ENCODE measurements at regions of chr9 and their contacts with region 1.

Region 1: DNA sequence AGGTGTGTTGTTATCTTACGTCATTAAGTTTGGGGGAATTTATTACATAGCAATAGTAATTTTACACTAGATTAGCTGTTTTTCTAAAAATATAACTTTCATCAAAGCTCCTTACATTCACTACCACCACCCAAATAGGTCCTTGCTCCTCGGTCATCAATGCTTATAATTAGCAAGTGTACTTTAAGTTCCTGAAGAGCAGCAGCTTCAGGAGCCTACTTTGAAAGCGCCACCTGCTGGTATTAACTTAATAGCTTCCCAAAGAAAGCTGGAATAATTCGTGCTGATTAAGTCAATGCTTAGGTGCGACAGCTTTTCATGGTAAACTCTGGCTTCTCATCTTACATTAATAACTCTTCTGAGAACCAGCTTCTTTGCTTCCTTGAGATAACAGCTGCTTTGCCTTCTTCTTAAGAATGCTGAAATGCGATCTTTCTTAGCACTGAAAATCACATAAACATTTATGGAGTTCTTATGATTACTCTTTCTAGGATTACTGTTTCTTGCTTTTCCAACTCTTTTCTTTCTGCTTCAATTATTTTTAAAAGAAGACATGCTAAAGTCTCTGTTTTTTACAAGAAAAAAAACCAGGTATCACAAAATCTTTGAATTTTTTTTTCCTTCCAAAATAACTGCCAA is 10.0 kb upstream of the C5 start:
- DNase-seq: no peak
- ATAC-seq: peak; percentile 40 to 41

Region 2: DNA sequence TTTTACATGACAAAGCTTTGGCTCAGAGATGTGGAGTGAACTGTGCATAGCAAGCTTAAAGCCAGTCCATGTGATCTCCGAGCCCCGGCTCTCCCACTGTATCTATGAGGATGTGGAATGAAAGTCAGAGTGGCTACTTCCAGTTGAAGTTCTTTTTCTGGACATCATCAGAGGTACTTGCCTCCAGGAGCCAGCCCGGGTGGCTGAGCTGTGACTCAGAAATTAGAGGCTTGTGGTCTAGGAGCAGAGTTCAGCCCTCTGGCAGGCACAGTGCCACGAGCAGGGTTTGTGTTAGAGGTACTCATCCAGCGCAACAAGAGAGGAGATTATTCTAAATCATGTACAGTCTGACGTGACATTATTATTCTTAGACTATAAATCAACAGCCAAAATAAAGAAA is 802.6 kb before region 1 on chr9:
- intact Hi-C with region 1: no loop called
- DNase-seq: no peak
- ATAC-seq: no peak

Region 3: DNA sequence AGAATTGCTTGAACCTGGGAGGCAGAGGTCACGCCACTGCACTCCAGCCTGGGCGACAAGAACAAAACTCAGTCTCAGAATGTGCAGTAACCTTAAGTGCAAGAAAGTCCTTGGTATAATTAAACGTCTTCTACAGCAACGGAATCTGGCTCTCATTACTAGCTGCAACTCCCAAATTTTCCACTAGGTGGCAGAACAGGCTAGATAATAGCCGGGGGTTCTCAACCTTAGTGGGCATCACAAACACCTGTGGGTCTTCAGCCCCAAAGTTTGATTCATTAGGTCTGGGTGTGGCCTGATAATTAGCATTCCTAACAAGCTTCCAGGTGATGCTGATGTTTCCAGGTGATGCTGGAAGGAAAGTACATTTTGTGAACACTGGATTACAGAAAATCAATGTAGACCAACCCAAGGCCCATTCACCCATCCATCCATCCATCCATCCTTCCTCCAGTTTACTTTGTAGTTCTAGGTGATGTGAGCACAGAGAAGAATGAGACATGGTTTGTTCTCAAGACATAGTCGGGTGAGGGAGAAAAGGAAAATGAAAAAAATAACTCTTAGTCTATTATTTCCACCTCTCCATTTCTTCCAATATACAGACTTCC is 304.2 kb before region 1 on chr9:
- intact Hi-C with region 1: loop called (anchors 5 to 10 kb)
- DNase-seq: peak; percentile 33
- ATAC-seq: peak; percentile 55 to 76

Region 4: DNA sequence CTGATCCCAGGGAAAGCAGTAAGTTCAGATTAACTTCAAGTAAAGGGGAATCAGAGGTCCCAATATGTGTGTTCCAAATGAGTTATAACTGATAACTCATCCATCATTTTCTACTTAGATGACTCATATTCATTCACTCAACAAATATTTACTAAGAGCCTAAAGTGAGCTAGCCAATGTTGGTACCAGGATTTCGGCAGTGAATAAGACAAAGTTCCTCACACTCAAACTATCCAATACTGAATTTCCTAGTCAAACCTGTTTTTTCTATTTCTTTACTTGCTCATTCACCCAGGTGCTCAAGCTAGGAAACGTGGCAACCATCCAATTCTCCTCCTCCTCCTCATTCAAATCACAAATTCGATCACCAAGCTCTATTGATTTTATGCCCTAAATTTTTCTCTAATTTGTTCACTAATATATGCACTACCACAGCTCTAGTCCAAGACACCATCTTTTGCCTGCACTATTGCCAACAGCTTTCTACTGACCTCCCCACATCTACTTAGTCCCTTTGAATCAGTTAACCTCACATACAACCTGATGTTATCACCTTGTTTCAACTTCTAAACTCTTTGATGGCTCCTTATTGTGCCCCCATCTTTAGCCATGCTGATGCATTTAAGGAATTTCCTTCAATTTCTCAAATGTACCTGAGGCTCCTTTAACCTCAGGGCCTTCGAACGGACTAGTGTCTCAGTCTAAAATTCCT is 292.5 kb before region 1 on chr9:
- intact Hi-C with region 1: loop called in 1 of 2 experiments (anchors 10 kb)
- DNase-seq: no peak
- ATAC-seq: no peak

Region 5: GRCh38 chr9:120982836-120983235 is 77.3 kb before region 1 on chr9:
- intact Hi-C with region 1: loop called in 1 of 2 experiments (anchors 5 kb)
- DNase-seq: no peak
- ATAC-seq: no peak

Measured in left cardiac atrium (tissue), 4 donors.